GM12878 (cell line): ENCODE measurements at regions of chr18 and their contacts with region 1.

Region 1: DNA sequence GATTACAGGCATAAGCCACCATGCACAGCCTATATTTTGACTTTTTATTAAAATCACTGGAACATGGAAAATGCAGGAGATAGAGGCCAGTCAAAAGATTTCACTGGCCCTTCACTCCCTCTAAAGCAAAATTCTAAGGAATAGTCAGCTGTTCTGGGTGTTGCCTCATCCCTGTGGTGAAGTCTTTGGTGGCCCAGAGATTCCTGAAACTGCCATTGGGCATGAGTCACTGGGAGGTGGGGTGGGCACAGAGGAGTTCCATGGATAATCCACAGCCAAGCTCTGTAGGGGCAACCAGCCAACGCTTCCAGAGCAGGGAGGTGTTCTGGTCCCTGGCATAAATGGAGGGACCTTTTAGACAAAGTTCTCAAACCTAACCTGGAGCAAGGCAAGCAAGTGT is 89.7 kb upstream of the TTC39C start:
- DNase-seq: no peak
- ATAC-seq: no peak
- H3K4me3 ChIP-seq: no peak overlapping the region
- H3K27ac ChIP-seq: no peak overlapping the region
- H3K4me1 ChIP-seq: no peaks in the 10 kb centered on the region
- H3K27me3 ChIP-seq: no peaks in the 10 kb centered on the region; a peak in 1 of 4 replicates
- CTCF ChIP-seq: no peak
- EP300 ChIP-seq: no peak
- POLR2A ChIP-seq: no peak
- RAD21 ChIP-seq: no peak

Region 2: DNA sequence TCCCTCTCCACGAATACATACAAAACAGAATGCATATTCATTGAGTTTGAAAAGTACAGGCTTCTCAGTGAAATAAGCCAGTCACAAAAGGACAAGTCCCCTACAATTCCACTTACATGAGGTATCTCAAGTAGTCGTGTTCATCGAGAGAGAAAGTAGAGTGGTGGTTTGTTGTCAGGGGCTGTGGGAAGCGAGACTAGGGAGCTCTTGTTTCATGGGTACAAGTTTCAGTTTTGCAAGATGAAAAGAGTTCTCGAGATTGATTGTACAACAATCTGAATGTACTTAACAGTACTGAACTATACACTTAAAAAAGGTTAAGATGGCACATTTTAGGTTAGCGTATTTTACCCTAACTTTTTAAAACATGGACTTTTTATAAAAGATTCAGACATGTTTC is 18.3 kb after region 1 on chr18:
- CTCF ChIA-PET with region 1: interaction called, 14 read pairs
- POLR2A ChIA-PET with region 1: no interaction called
- RAD21 ChIA-PET with region 1: interaction called, 4 read pairs
- SMC1A ChIA-PET with region 1: interaction called, 22 read pairs
- in situ Hi-C with region 1: no loop called
- intact Hi-C with region 1: no loop called
- DNase-seq: peak; percentile 68
- ATAC-seq: peak; percentile 84
- H3K4me3 ChIP-seq: no peak overlapping the region
- H3K27ac ChIP-seq: peak overlapping the region; percentile 65
- H3K4me1 ChIP-seq: peaks cover 44% of the 10 kb centered on the region
- H3K27me3 ChIP-seq: no peaks in the 10 kb centered on the region
- CTCF ChIP-seq: no peak
- EP300 ChIP-seq: peak in 1 of 2 experiments; percentile 27; a peak in 2 of 4 replicates
- POLR2A ChIP-seq: no peak
- RAD21 ChIP-seq: no peak